Heart right ventricle (tissue), 16 donors: ENCODE measurements at regions of chr16 and their contacts with region 1.

Region 1: DNA sequence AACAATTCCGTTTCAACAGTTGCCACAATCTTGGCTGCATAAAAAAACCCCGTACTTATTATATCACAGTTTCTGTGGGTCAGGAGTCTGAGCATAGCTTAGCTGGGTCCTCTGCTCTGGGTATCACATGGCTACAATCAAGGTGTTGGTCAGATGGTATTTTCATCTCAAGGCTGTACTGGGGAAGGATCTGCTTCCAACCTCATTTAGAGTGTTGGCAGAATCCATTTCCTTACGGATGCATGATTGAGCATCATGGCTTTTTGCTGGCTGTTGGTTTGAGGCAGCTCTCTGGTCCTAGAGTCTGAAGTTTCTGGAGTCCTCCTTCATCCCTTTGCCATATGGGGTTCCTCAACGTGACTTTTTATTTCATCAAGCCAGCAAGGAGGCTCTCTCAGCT is 177.0 kb downstream of the HAPSTR1 start:
- DNase-seq: no peak
- ATAC-seq: no peak
- H3K4me3 ChIP-seq: no peak overlapping the region
- H3K27ac ChIP-seq: no peak overlapping the region
- H3K4me1 ChIP-seq: no peaks in the 10 kb centered on the region
- H3K27me3 ChIP-seq: peaks cover 0 to 4% (median 0%) of the 10 kb centered on the region in 7 donors
- CTCF ChIP-seq: no peak

Region 2: GRCh38 chr16:9489835-9490467 is 221.5 kb after region 1 on chr16:
- intact Hi-C with region 1: no loop called
- DNase-seq: peak; percentile 46 to 56
- ATAC-seq: peak in 7 of 8 donors; percentile 55 to 98 (median 94)
- H3K4me3 ChIP-seq: no peak overlapping the region
- H3K27ac ChIP-seq: peak overlapping the region in 5 of 10 donors; percentile 28 to 70 (median 43)
- H3K4me1 ChIP-seq: no peaks in the 10 kb centered on the region
- H3K27me3 ChIP-seq: no peaks in the 10 kb centered on the region
- CTCF ChIP-seq: no peak

Region 3: GRCh38 chr16:9929313-9929712 is 660.9 kb after region 1 on chr16:
- intact Hi-C with region 1: loop called in 1 of 10 experiments (anchors 5 kb)
- DNase-seq: no peak
- ATAC-seq: no peak
- H3K4me3 ChIP-seq: no peak overlapping the region
- H3K27ac ChIP-seq: no peak overlapping the region
- H3K4me1 ChIP-seq: peaks cover 0 to 20% (median 8%) of the 10 kb centered on the region in 9 donors
- H3K27me3 ChIP-seq: no peaks in the 10 kb centered on the region
- CTCF ChIP-seq: no peak